ENCODE measurements at regions of chr4 and their contacts with region 1.

Region 1: DNA sequence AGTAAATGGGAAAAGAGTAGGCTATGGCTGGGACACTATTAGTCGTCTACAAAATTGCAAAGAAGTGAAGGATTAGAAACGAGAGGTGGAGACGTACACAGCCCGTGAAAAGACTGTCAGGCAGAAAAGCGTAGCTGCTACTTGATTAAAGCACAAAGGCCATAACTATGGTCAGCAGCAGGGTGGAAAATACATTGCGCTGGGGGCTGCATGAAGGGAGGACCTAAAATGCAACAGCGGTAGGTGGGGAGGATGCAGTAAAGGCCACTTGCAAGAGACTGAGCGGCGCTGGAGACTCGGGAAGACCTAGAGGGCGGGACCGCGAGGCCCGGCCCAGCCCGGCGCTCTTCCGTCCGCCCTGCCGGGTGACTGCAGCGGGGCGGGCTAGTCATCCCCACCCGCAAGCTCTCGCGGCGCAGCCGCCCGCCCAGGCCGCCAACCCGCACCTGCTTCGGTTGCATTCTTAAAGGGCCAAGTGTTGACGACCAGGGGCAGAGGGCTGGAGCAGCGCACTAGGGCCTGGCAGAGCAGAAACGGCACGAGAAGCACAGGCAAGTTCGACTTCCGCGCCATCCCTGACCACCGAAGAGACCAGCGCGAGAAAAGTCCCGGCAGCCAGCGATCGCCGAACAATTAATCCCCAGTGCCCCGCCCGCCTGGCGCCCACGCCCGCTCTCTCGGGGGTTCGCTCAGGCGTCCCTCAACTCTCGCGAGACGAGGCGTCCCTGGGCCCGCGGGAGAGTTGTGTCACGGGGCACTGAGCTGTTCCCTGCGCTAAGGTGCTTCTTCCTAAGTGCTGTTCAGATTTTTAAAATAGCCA is at the start of gene AGA:
- DNase-seq: peak; percentile 87
- ATAC-seq: peak; percentile 98
- H3K4me3 ChIP-seq: peak within 1 kb of the TSS; percentile 80 to 94 (median 84)
- H3K27ac ChIP-seq: peak within 1 kb of the TSS; percentile 90
- H3K4me1 ChIP-seq: peaks cover 18% of the 10 kb centered on the region
- H3K27me3 ChIP-seq: no peaks in the 10 kb centered on the region
- CTCF ChIP-seq: 0 out of 2 replicates have a peak, but pooled peaks have one; percentile 9
- EP300 ChIP-seq: no peak
- POLR2A ChIP-seq: peak; percentile 89 to 90
- RAD21 ChIP-seq: peak; percentile 34; the same call in 1 of the 2 replicates
- total RNA-seq, gene AGA: 12.2 and 22.3 TPM in 2 replicates

Region 2: GRCh38 chr4:176150356-176150682 is 1291.7 kb before region 1 on chr4:
- CTCF ChIA-PET with region 1: no interaction called
- POLR2A ChIA-PET with region 1: no interaction called
- in situ Hi-C with region 1: no loop called
- intact Hi-C with region 1: loop called (anchors 5 kb)
- DNase-seq: peak; percentile 5
- ATAC-seq: no peak
- H3K4me3 ChIP-seq: no peak overlapping the region
- H3K27ac ChIP-seq: no peak overlapping the region
- H3K4me1 ChIP-seq: no peaks in the 10 kb centered on the region
- H3K27me3 ChIP-seq: no peaks in the 10 kb centered on the region
- CTCF ChIP-seq: no peak
- EP300 ChIP-seq: no peak
- POLR2A ChIP-seq: no peak
- RAD21 ChIP-seq: no peak

Region 3: GRCh38 chr4:177309522-177310371 is 132.3 kb before region 1 on chr4 and contains the start of gene NEIL3:
- CTCF ChIA-PET with region 1: no interaction called
- POLR2A ChIA-PET with region 1: no interaction called
- in situ Hi-C with region 1: no loop called
- intact Hi-C with region 1: loop called (anchors 5 kb)
- DNase-seq: peak; percentile 79
- ATAC-seq: peak; percentile 98
- H3K4me3 ChIP-seq: peak within 1 kb of the TSS; percentile 74 to 85 (median 76)
- H3K27ac ChIP-seq: peak within 1 kb of the TSS; percentile 54
- H3K4me1 ChIP-seq: peaks cover 24% of the 10 kb centered on the region
- H3K27me3 ChIP-seq: no peaks in the 10 kb centered on the region; a peak in 1 of 5 replicates
- CTCF ChIP-seq: 0 out of 2 replicates have a peak, but pooled peaks have one; percentile 3
- EP300 ChIP-seq: no peak; a peak in 1 of 4 replicates
- POLR2A ChIP-seq: peak; percentile 67 to 71
- RAD21 ChIP-seq: no peak
- total RNA-seq, gene NEIL3: 8.4 and 10.6 TPM in 2 replicates

Region 4: GRCh38 chr4:177393236-177393635 is 48.8 kb before region 1 on chr4:
- CTCF ChIA-PET with region 1: no interaction called
- POLR2A ChIA-PET with region 1: interaction called, 16 read pairs
- in situ Hi-C with region 1: no loop called
- intact Hi-C with region 1: loop called (anchors 5 kb)
- DNase-seq: no peak
- ATAC-seq: no peak; the same call in 1 of the 3 replicates
- H3K4me3 ChIP-seq: no peak overlapping the region
- H3K27ac ChIP-seq: no peak overlapping the region
- H3K4me1 ChIP-seq: peaks cover 14% of the 10 kb centered on the region
- H3K27me3 ChIP-seq: no peaks in the 10 kb centered on the region; a peak in 2 of 5 replicates
- CTCF ChIP-seq: no peak
- EP300 ChIP-seq: no peak
- POLR2A ChIP-seq: no peak
- RAD21 ChIP-seq: no peak

Measured in HepG2 (cell line).